Naive thymus-derived CD4-positive, alpha-beta T cell (primary cell): ENCODE measurements at regions of chr15 and their contacts with region 1.

Region 1: DNA sequence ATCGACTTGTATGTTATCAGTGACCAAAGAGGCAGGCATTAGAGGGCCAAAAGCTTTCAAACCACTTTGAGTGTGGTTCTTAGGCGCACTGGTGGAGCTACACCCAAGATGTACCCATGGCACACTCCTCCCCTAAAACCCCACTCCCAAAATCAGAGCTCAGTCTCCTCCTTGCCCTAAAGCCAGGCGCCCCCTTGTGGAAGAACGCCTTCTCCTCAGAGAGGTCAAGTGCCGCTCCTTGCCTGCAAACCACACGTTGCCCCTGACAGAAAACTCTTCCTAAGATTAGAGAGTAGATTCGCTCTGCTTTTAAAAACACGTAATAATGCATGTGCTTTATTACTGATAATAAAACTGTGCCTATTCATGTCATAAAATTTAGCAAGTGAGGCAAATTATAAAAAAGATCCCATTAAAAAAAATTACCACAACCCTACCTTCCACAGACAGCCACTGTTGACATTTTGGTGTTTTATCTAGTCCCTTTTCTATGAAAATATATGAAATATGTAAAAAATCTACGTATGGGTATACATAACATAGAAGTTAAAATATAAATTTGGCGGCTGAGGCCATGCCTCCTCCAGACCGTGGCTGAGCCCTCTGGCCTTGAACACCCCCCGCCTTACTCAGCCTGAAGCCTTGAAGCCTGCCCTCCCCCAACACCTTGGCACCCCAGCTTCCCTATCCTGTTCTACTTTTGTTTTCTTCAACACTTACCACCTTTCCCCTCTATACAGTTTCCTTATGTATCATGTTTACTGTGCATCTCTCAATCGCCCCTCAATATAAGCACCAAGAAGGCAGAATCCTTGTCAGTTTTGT is 33.5 kb downstream of the BCL2L10 start:
- DNase-seq: peak; percentile 58 to 82 (median 75)
- ATAC-seq: peak; percentile 87
- H3K4me3 ChIP-seq: no peak overlapping the region
- H3K4me3 Mint-ChIP-seq: no peak overlapping the region
- H3K27ac ChIP-seq: no peak overlapping the region
- H3K27ac Mint-ChIP-seq: peak overlapping the region in 1 of 9 donors; percentile 49
- H3K4me1 ChIP-seq: peaks cover 0 to 13% of the 10 kb centered on the region in 2 donors
- H3K4me1 Mint-ChIP-seq: peaks cover 0 to 26% (median 10%) of the 10 kb centered on the region in 7 donors
- H3K27me3 ChIP-seq: no peaks in the 10 kb centered on the region
- H3K27me3 Mint-ChIP-seq: peaks cover 0 to 7% (median 0%) of the 10 kb centered on the region in 5 donors

Region 2: GRCh38 chr15:51888593-51889195 is 190.4 kb before region 1 on chr15:
- CTCF ChIA-PET with region 1: no interaction called
- POLR2A ChIA-PET with region 1: no interaction called
- intact Hi-C with region 1: loop called in 1 of 2 experiments (anchors 1 kb)
- DNase-seq: peak in 4 of 9 donors; percentile 5 to 29 (median 14)
- ATAC-seq: peak; percentile 40
- H3K4me3 ChIP-seq: no peak overlapping the region
- H3K4me3 Mint-ChIP-seq: no peak overlapping the region
- H3K27ac ChIP-seq: no peak overlapping the region
- H3K27ac Mint-ChIP-seq: peak overlapping the region in 3 of 9 donors; percentile 0 to 22 (median 0)
- H3K4me1 ChIP-seq: peaks cover 0 to 3% of the 10 kb centered on the region in 2 donors
- H3K4me1 Mint-ChIP-seq: peaks cover 0 to 13% (median 5%) of the 10 kb centered on the region in 7 donors
- H3K27me3 ChIP-seq: no peaks in the 10 kb centered on the region
- H3K27me3 Mint-ChIP-seq: no peaks in the 10 kb centered on the region

Region 3: GRCh38 chr15:52050416-52050815 is 28.7 kb before region 1 on chr15:
- CTCF ChIA-PET with region 1: interaction called, 9 read pairs
- POLR2A ChIA-PET with region 1: interaction called, 3 read pairs
- intact Hi-C with region 1: loop called in 1 of 2 experiments (anchors 1 kb)
- DNase-seq: no peak
- ATAC-seq: no peak
- H3K4me3 ChIP-seq: no peak overlapping the region
- H3K4me3 Mint-ChIP-seq: no peak overlapping the region
- H3K27ac ChIP-seq: no peak overlapping the region
- H3K27ac Mint-ChIP-seq: no peak overlapping the region
- H3K4me1 ChIP-seq: peaks cover 7 to 12% of the 10 kb centered on the region in 2 donors
- H3K4me1 Mint-ChIP-seq: peaks cover 17 to 29% (median 22%) of the 10 kb centered on the region in 7 donors
- H3K27me3 ChIP-seq: no peaks in the 10 kb centered on the region
- H3K27me3 Mint-ChIP-seq: no peaks in the 10 kb centered on the region

Region 4: GRCh38 chr15:52100807-52101206 is 21.7 kb after region 1 on chr15:
- CTCF ChIA-PET with region 1: no interaction called
- POLR2A ChIA-PET with region 1: no interaction called
- intact Hi-C with region 1: no loop called
- DNase-seq: no peak
- ATAC-seq: no peak
- H3K4me3 ChIP-seq: no peak overlapping the region
- H3K4me3 Mint-ChIP-seq: no peak overlapping the region
- H3K27ac ChIP-seq: no peak overlapping the region
- H3K27ac Mint-ChIP-seq: no peak overlapping the region
- H3K4me1 ChIP-seq: no peaks in the 10 kb centered on the region
- H3K4me1 Mint-ChIP-seq: peaks cover 0 to 5% (median 0%) of the 10 kb centered on the region in 7 donors
- H3K27me3 ChIP-seq: no peaks in the 10 kb centered on the region
- H3K27me3 Mint-ChIP-seq: peaks cover 0 to 10% (median 7%) of the 10 kb centered on the region in 5 donors